ENCODE measurements at regions of chr2 and their contacts with region 1.

Region 1: DNA sequence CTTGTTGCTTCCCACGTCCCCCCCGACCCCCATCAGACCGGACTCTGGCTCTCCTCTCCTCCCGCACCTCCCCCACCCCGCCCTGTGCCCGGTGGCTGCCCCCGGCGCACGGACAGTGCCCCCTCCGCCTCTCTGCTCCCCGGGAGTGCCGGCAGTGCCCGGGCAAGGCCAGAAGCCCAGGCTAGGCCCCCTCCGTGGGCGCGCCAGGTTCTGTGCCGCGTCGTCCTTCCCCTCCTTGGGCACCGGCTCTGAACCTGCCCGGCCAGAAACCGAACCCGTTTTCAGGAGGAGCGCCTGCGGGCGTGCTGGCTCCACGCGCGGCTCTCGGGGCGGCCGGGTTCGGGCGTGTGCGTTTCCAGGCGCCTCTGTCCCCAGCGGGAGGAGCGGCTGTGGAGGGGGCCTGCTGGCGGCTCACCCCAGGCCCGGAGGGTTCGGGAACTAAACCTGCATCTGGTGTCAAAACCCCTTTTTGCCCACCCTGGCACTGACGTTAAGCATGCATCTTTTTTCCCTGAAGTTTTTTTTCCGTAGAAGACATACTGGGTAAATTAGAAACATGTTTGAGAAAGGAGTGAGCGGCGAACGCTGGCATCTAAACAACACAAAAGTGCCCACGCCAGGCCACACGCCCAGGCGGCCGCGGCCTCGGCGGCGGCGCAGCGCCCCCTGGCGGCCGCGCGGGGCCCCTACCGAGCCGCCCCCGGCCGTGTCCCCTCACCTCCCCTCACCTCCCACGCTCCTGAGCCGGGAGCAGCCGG is 123.9 kb upstream of the SLC1A4 start:
- DNase-seq: peak; percentile 90
- CTCF ChIP-seq: peak; percentile 76

Region 2: DNA sequence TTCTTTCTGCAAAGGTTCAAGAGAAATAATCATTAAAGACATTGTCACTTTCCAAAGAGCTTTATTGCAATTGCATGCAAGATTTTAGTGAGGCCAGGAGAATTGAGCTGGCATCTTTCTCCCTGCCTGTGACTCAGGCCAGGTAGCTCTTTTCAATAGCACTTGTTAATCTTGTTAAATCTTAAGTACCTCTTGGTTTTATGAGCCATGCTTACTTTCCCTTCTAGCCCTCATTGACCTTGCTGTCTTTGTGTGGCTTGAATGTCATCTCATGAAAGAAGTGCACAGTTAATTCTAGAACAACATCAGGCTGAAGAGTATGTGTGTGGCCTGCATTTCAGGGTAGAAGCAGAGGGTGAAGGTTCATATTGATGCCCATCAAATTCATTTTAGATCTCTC is 426.1 kb before region 1 on chr2:
- in situ Hi-C with region 1: no loop called
- DNase-seq: no peak
- CTCF ChIP-seq: no peak

Region 3: GRCh38 chr2:64609227-64609941 is 255.9 kb before region 1 on chr2:
- in situ Hi-C with region 1: loop called (anchors 10 kb)
- DNase-seq: peak; percentile 93
- CTCF ChIP-seq: peak; percentile 88

Measured in GM13976 (cell line).